A673 (cell line): ENCODE measurements at regions of chr15 and their contacts with region 1.

Region 1: GRCh38 chr15:74809956-74810355 is 2.7 kb upstream of the LMAN1L start:
- DNase-seq: no peak
- H3K4me3 ChIP-seq: no peak overlapping the region
- H3K27ac ChIP-seq: no peak overlapping the region
- H3K4me1 ChIP-seq: no peaks in the 10 kb centered on the region
- H3K27me3 ChIP-seq: no peaks in the 10 kb centered on the region
- CTCF ChIP-seq: no peak

Region 2: GRCh38 chr15:75153087-75153486 is 343.1 kb after region 1 on chr15:
- CTCF ChIA-PET with region 1: no interaction called
- POLR2A ChIA-PET with region 1: no interaction called
- intact Hi-C with region 1: no loop called
- DNase-seq: peak; percentile 48
- H3K4me3 ChIP-seq: no peak overlapping the region
- H3K27ac ChIP-seq: no peak overlapping the region
- H3K4me1 ChIP-seq: no peaks in the 10 kb centered on the region
- H3K27me3 ChIP-seq: no peaks in the 10 kb centered on the region
- CTCF ChIP-seq: no peak

Region 3: GRCh38 chr15:75597667-75598341 is 787.8 kb after region 1 on chr15:
- CTCF ChIA-PET with region 1: no interaction called
- POLR2A ChIA-PET with region 1: interaction called, 10 read pairs
- intact Hi-C with region 1: no loop called
- DNase-seq: peak; percentile 70
- H3K4me3 ChIP-seq: no peak overlapping the region
- H3K27ac ChIP-seq: peak overlapping the region; percentile 85
- H3K4me1 ChIP-seq: peaks cover 33% of the 10 kb centered on the region
- H3K27me3 ChIP-seq: no peaks in the 10 kb centered on the region
- CTCF ChIP-seq: peak; percentile 63